Vagina (tissue), 2 donors: ENCODE measurements at regions of chr4 and their contacts with region 1.

Region 1: GRCh38 chr4:101347557-101348366 is 436 bp upstream of the PPP3CA start:
- DNase-seq: peak; percentile 99
- H3K4me3 ChIP-seq: peak overlapping the region; percentile 88 to 92
- H3K27ac ChIP-seq: peak overlapping the region; percentile 92
- H3K4me1 ChIP-seq: peaks cover 44% of the 10 kb centered on the region
- H3K27me3 ChIP-seq: no peaks in the 10 kb centered on the region
- CTCF ChIP-seq: no peak
- POLR2A ChIP-seq: peak in 1 of 2 donors; percentile 25

Region 2: DNA sequence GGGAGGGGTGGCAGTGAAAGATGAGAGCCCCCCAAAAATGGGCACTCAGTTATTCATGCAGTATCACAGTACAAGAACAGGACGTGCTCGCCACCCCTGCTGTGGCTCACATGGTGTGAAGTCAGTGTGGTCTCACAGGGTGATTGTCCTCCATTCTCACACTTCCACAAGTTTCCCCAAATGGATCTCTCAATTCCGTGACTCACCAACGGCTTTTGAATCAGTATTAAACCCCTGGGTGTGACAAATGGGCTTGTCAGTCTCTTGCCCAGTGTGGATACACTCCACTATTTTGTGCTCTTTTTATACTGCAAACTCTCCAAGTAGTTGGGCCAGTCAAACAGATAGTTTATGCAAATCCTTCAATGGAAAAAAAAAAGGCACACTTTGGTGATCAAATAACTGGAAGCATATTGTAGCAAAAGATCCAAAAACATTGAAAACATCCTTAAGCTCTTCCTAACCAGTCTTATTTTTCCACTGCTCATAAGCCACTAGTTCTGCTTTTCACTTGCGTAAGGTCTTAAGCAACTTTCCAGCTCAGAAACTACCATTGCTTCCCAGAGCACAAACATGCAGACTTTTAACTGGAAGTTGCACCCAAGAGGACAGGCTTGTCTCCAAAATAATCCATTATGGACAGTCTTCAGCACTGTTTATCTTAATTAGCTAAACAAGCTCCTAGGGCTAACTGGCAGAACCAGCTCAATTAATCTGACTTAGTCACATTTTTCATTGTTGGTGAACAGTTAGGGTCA is 366.1 kb before region 1 on chr4:
- intact Hi-C with region 1: loop called (anchors 5 kb)
- DNase-seq: no peak
- H3K4me3 ChIP-seq: no peak overlapping the region
- H3K27ac ChIP-seq: no peak overlapping the region
- H3K4me1 ChIP-seq: peaks cover 15% of the 10 kb centered on the region
- H3K27me3 ChIP-seq: no peaks in the 10 kb centered on the region
- CTCF ChIP-seq: no peak
- POLR2A ChIP-seq: no peak

Region 3: GRCh38 chr4:101191302-101192098 is 156.3 kb before region 1 on chr4:
- intact Hi-C with region 1: loop called (anchors 5 kb)
- DNase-seq: no peak
- H3K4me3 ChIP-seq: peak overlapping the region in 1 of 2 donors; percentile 12
- H3K27ac ChIP-seq: peak overlapping the region; percentile 76
- H3K4me1 ChIP-seq: peaks cover 28% of the 10 kb centered on the region
- H3K27me3 ChIP-seq: no peaks in the 10 kb centered on the region
- CTCF ChIP-seq: no peak
- POLR2A ChIP-seq: no peak